ENCODE measurements at regions of chr16 and their contacts with region 1.

Region 1: GRCh38 chr16:695355-696089 is 5.3 kb upstream of the WDR24 start:
- DNase-seq: peak; percentile 72 to 93
- H3K4me3 ChIP-seq: no peak overlapping the region
- H3K27ac ChIP-seq: no peak overlapping the region
- H3K4me1 ChIP-seq: peaks cover 8% of the 10 kb centered on the region
- H3K27me3 ChIP-seq: peaks cover 8% of the 10 kb centered on the region; the same call in 1 of the 2 replicates
- CTCF ChIP-seq: no peak

Region 2: GRCh38 chr16:1564325-1564724 is 868.8 kb after region 1 on chr16:
- CTCF ChIA-PET with region 1: interaction called, 12 read pairs
- POLR2A ChIA-PET with region 1: no interaction called
- intact Hi-C with region 1: no loop called
- DNase-seq: no peak
- H3K4me3 ChIP-seq: no peak overlapping the region
- H3K27ac ChIP-seq: no peak overlapping the region
- H3K4me1 ChIP-seq: no peaks in the 10 kb centered on the region
- H3K27me3 ChIP-seq: no peaks in the 10 kb centered on the region
- CTCF ChIP-seq: 0 out of 2 replicates have a peak, but pooled peaks have one; percentile 14

Measured in PC-9 (cell line).